Activated T-helper 2 cell treated with anti-CD3 and anti-CD28 coated beads, Interferon-gamma antibody, Interleukin-2, Interleukin-4, amounts not matched to agents 10 μg/mL and 5 μg/mL and 100 μg/mL, durations not matched to agents 14 hours and 24 hours and 36 hours (primary cell): ENCODE measurements at regions of chr11 and their contacts with region 1.

Region 1: GRCh38 chr11:85627998-85628770 is at the start of gene TMEM126B:
- DNase-seq: peak; percentile 95
- H3K4me3 Mint-ChIP-seq: peak within 1 kb of the TSS; percentile 89
- H3K27ac Mint-ChIP-seq: peak within 1 kb of the TSS; percentile 88
- H3K4me1 Mint-ChIP-seq: peaks cover 38% of the 10 kb centered on the region
- H3K27me3 Mint-ChIP-seq: peaks cover 2% of the 10 kb centered on the region
- total RNA-seq, gene TMEM126B: 63.8 and 66.5 TPM in 2 replicates

Region 2: DNA sequence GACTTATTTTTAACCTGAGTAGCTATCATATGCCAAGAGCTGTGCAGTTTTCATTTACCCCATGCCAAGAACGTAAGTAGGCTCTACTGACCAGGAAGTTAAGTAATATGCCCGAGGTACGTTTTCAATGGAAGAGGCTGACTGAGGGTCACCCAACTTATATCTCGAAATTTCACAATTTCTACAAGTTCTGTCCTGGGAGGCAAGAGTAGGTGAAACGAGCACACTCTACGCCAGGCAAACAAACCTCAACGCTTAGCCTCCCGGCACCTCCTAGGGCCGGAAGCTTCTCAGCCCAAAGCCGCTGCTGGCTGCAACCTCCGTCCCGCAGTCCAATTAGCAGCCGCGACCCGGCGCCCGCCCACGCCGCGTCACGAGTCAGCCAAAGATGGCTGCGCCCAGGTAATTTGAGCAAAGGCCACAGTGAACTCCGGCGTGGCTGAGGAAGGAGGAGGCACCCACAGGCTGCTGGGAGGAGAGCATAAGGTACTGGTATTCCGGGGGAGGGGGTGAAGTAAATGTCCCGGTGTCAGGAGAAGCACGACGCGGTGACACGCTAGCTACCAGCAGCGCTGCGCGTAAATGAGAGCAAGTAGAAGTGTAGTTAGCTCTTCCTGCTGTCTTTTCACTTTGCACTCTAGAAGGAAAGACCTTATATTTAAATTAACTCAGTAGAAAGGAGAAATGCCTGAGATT is 19.6 kb after region 1 on chr11 and contains the start of gene TMEM126A:
- intact Hi-C with region 1: loop called (anchors 1 kb)
- DNase-seq: peak; percentile 86
- H3K4me3 Mint-ChIP-seq: peak within 1 kb of the TSS; percentile 95
- H3K27ac Mint-ChIP-seq: peak within 1 kb of the TSS; percentile 92
- H3K4me1 Mint-ChIP-seq: peaks cover 19% of the 10 kb centered on the region
- H3K27me3 Mint-ChIP-seq: peaks cover 16% of the 10 kb centered on the region
- total RNA-seq, gene TMEM126A: 48.9 and 49.3 TPM in 2 replicates

Region 3: DNA sequence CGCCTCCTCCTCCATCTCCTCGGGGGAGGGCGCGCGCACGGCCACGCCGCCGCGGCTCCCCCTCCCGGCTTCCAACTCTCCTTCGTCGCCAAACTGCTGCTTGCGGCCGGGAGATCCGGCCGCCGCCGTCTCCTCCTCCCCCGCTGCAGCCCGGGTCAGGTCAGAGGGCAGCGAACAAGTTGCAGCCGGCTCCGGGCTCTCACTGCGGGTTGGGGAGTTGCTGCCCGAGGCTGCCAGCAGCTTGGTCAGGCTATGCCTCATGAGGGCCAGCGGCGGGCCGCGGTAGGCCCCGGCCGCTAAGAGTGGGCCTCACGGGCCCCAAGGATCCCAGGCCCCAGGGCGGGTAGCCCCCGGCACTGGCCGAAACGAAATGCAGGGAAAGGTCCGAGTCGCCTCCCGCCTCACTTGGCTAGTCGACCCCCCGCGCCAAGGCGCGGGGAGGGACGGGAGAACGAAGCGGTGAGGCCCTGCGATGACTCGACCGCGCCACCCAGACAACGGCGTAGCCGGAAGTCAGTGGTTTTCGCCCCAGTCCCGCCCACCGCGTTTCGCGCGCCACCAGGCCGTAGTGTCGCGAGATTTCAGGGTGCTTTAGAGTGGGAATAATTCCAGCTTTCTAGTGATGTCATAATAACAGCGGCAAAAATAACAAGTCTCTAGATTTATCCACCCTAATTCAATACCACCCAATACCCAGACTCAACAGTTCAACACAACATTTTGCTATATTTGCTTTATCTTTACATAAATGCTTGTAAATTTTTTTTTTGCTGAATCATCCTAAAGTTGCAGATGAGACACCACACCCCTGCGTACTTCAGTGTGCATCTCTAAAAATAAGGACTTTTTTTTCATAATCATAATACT is 36.7 kb after region 1 on chr11 and contains the start of gene CREBZF:
- intact Hi-C with region 1: loop called (anchors 1 kb)
- DNase-seq: peak; percentile 94
- H3K4me3 Mint-ChIP-seq: peak within 1 kb of the TSS; percentile 99
- H3K27ac Mint-ChIP-seq: peak within 1 kb of the TSS; percentile 96
- H3K4me1 Mint-ChIP-seq: peaks cover 33% of the 10 kb centered on the region
- H3K27me3 Mint-ChIP-seq: no peaks in the 10 kb centered on the region
- total RNA-seq, gene CREBZF: 47.8 and 49.7 TPM in 2 replicates

Region 4: GRCh38 chr11:85682330-85683305 is 54.4 kb after region 1 on chr11:
- intact Hi-C with region 1: loop called (anchors 5 kb)
- DNase-seq: peak; percentile 40
- H3K4me3 Mint-ChIP-seq: peak overlapping the region; percentile 81
- H3K27ac Mint-ChIP-seq: peak overlapping the region; percentile 79
- H3K4me1 Mint-ChIP-seq: peaks cover 17% of the 10 kb centered on the region
- H3K27me3 Mint-ChIP-seq: peaks cover 13% of the 10 kb centered on the region

Region 5: DNA sequence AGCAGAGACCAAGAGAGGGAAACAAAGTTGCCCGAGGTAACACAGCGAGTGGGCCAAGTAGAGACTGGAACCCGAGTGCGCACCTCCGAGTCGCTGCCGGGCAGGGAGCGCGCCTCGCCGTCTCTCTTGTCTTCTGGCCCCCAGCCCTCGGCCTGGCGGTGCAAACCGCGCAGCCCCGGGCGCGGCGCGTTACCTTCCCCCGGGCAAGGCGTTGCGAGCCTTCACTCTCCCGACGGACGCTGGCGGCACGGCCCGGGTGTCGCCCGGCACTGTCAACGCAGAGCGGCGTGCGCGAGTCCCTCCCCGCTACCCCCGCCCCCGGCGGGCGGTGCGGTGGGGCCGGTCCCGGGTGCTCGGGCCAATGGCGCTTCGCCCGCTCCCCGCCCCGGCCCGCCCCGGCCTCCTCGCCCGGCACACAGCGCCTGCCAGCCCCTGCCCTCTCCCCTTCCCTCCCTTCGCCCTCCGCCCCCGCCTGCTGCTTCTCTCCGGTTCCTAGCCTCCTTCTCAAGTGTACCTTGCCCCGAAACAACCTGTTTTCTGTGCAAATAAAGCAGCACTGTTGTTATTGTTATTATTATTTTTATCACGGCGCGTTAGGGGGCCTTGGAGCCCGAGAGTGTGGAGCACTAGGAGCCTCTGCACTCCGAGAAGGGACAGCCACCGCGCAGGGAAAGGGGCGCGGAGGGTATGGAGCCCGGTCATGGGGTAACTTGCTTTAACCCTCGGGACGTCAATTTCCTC is 182.9 kb after region 1 on chr11 and contains the start of gene SYTL2:
- intact Hi-C with region 1: loop called (anchors 5 kb)
- DNase-seq: peak; percentile 74
- H3K4me3 Mint-ChIP-seq: peak within 1 kb of the TSS; percentile 82
- H3K27ac Mint-ChIP-seq: peak within 1 kb of the TSS; percentile 52
- H3K4me1 Mint-ChIP-seq: peaks cover 45% of the 10 kb centered on the region
- H3K27me3 Mint-ChIP-seq: peaks cover 3% of the 10 kb centered on the region
- total RNA-seq, gene SYTL2: 16.0 and 17.3 TPM in 2 replicates

Region 6: GRCh38 chr11:86302100-86302793 is 674.1 kb after region 1 on chr11 and contains the start of gene HIKESHI:
- intact Hi-C with region 1: loop called (anchors 5 kb)
- DNase-seq: peak; percentile 81
- H3K4me3 Mint-ChIP-seq: peak within 1 kb of the TSS; percentile 99
- H3K27ac Mint-ChIP-seq: peak within 1 kb of the TSS; percentile 96
- H3K4me1 Mint-ChIP-seq: peaks cover 25% of the 10 kb centered on the region
- H3K27me3 Mint-ChIP-seq: peaks cover 3% of the 10 kb centered on the region
- total RNA-seq, gene HIKESHI: 49.1 and 56.0 TPM in 2 replicates